Upper lobe of right lung (tissue), 1 donor: ENCODE measurements at regions of chr12 and their contacts with region 1.

Region 1: GRCh38 chr12:1804545-1805332 is 15.6 kb upstream of the LRTM2 start:
- DNase-seq: peak; percentile 91
- ATAC-seq: peak; percentile 92
- H3K4me3 ChIP-seq: no peak overlapping the region
- H3K27ac ChIP-seq: no peak overlapping the region
- H3K4me1 ChIP-seq: no peaks in the 10 kb centered on the region
- H3K27me3 ChIP-seq: no peaks in the 10 kb centered on the region
- CTCF ChIP-seq: no peak

Region 2: DNA sequence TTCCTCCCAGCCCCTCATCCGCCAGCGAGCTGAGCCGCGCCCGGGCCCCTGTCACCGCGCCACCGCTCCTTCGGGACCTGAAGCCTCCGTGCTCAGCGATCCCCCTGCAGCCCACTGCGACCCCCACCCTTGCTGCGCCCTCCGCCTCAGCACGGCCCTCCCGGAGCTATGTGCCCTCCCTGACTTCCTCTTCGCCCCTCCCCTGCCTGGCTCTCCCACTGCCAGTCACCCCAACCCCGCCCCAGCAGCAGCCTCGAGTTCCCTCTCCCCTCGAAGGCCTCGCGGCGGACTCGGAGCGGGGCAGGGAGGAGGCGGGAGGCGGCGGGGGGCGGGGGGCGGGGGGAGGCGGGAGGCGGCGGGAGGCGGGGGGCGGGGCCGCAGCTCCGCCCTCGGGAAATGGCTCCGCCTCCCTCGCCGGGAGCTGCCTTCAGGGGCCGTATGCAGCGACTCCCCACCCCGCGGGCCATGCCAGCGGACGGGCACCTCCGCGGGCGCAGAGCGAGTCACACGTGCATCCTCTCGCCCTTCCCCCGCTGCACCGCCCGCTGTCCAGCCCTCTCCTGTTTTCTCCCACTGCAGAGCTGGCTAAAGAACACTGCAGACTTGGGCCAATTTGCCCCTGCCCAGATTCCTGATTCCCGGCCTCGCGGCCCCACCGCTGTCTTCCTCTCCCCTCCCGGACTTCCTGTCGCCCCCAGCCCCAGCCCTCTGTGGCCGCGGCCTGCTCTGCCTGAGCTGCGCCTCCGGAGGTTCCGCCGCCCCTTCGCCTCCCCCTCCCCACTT is 143.0 kb before region 1 on chr12:
- intact Hi-C with region 1: no loop called
- DNase-seq: peak; percentile 97
- ATAC-seq: peak; percentile 92
- H3K4me3 ChIP-seq: peak overlapping the region; percentile 56
- H3K27ac ChIP-seq: peak overlapping the region; percentile 90
- H3K4me1 ChIP-seq: peaks cover 33% of the 10 kb centered on the region
- H3K27me3 ChIP-seq: no peaks in the 10 kb centered on the region
- CTCF ChIP-seq: no peak

Region 3: DNA sequence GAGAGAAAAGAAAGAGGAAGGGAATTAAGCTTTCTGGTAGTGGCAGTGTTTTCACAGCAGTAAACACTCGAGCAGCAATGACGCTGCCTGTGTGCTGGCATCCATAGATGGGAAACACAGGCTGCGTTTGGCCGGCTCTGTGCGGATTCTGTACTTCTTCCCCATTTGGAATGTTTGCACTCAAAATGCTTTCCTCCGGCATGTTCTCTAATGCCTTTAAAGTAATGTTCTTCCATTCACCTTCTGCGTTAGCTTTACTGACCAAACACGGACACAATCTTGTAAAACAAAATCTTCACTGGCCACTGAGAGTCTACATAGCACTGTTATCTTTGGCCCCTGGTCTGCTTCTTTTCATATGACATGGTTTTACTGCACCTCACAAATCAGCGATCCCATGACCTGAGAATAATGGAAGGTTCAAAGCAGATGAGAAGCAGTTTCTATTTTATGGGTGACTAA is 168.1 kb after region 1 on chr12:
- intact Hi-C with region 1: no loop called
- DNase-seq: no peak
- ATAC-seq: no peak
- H3K4me3 ChIP-seq: no peak overlapping the region
- H3K27ac ChIP-seq: peak overlapping the region; percentile 52
- H3K4me1 ChIP-seq: peaks cover 14% of the 10 kb centered on the region
- H3K27me3 ChIP-seq: no peaks in the 10 kb centered on the region
- CTCF ChIP-seq: no peak

Region 4: DNA sequence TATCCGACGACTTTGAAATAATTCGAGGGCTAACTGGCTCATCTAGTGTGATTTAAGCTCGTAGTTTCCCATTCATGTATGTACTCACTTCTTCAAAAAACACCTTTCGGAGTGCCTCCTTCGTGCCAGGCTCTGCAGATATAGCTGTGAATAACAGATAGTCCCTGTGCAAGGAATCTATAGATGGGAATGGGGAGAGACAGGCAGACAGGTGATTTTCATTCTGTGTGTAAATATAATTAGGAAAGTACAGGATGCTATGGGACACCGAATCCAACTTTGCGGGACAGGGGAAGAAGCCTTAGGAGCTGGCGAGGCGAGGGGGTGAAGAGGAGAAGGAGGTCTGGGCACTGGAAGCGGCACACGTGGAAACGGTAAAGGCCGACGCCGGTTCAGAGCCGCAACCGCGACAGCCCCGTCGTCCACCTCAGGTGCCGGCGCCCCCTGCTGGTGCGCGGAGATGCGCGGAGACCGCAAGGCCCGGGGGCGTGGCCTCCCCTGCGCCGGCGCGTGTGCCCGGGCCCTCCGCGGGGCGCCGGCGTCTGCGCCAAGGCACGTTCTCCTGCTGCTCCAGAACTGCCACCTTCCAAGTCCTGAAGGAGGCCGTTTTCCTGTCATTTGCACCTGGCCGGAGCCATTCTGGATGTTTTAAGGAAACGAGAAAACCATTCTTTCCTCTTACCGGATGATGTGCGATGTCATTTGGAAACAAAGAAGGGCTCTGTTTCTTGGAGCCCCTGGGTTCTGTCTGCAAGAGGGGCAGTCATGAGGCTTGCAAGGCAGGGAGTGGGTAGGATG is 230.1 kb after region 1 on chr12:
- intact Hi-C with region 1: loop called (anchors 10 kb)
- DNase-seq: peak; percentile 93
- ATAC-seq: peak; percentile 99
- H3K4me3 ChIP-seq: peak overlapping the region; percentile 46
- H3K27ac ChIP-seq: no peak overlapping the region
- H3K4me1 ChIP-seq: peaks cover 10% of the 10 kb centered on the region
- H3K27me3 ChIP-seq: peaks cover 5% of the 10 kb centered on the region
- CTCF ChIP-seq: peak; percentile 97